PC-3 (cell line): ENCODE measurements at regions of chr9 and their contacts with region 1.

Region 1: GRCh38 chr9:107749787-107750444 is 260.3 kb upstream of the KLF4 start:
- DNase-seq: peak; percentile 84
- ATAC-seq: peak; percentile 78
- H3K4me3 ChIP-seq: peak overlapping the region; percentile 53
- H3K27ac ChIP-seq: peak overlapping the region; percentile 99
- H3K4me1 ChIP-seq: peaks cover 45% of the 10 kb centered on the region
- H3K27me3 ChIP-seq: no peaks in the 10 kb centered on the region
- CTCF ChIP-seq: no peak

Region 2: DNA sequence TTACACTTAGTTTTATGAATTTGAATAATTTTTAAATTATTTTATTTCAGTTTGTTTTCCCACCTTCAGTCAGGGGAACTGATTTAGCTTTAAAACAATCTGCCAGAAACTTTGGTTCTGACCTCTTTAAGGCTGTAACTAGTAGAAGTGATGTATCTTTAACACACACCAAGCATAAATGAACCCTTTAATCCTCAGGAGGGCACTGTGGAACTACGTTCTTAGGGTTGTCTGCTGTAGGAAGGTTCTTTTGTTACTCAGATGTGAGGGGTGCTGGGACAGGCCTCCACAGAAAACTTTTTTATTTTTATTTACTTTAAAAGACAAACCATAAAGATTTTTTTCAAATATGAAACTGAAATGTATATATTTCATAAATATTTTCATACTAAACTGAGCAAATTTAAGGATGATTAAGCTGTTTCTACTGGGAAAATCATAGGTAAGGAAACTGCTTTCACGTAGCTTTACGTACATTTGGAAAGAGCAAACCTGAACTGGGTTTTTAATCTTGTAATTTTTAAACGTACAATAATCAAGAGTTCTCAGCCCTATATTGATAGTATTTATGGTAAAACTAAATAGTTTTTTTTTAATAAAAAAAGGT is 265.7 kb before region 1 on chr9:
- CTCF ChIA-PET with region 1: no interaction called
- POLR2A ChIA-PET with region 1: no interaction called
- intact Hi-C with region 1: loop called (anchors 2 kb)
- DNase-seq: peak; percentile 74
- ATAC-seq: peak; percentile 40
- H3K4me3 ChIP-seq: no peak overlapping the region
- H3K27ac ChIP-seq: no peak overlapping the region
- H3K4me1 ChIP-seq: peaks cover 27% of the 10 kb centered on the region
- H3K27me3 ChIP-seq: no peaks in the 10 kb centered on the region
- CTCF ChIP-seq: peak; percentile 66

Region 3: GRCh38 chr9:107504569-107505377 is 245.1 kb before region 1 on chr9:
- CTCF ChIA-PET with region 1: interaction called, 4 read pairs
- POLR2A ChIA-PET with region 1: no interaction called
- intact Hi-C with region 1: loop called (anchors 5 kb)
- DNase-seq: peak; percentile 92
- ATAC-seq: peak; percentile 89
- H3K4me3 ChIP-seq: peak overlapping the region; percentile 50
- H3K27ac ChIP-seq: peak overlapping the region; percentile 99
- H3K4me1 ChIP-seq: peaks cover 23% of the 10 kb centered on the region
- H3K27me3 ChIP-seq: no peaks in the 10 kb centered on the region
- CTCF ChIP-seq: no peak

Region 4: GRCh38 chr9:107711540-107711939 is 38.4 kb before region 1 on chr9:
- CTCF ChIA-PET with region 1: no interaction called
- POLR2A ChIA-PET with region 1: no interaction called
- intact Hi-C with region 1: loop called (anchors 1 kb)
- DNase-seq: peak; percentile 97
- ATAC-seq: peak; percentile 75
- H3K4me3 ChIP-seq: no peak overlapping the region
- H3K27ac ChIP-seq: peak overlapping the region; percentile 75
- H3K4me1 ChIP-seq: peaks cover 40% of the 10 kb centered on the region
- H3K27me3 ChIP-seq: no peaks in the 10 kb centered on the region
- CTCF ChIP-seq: no peak

Region 5: GRCh38 chr9:107841076-107841475 is 91.2 kb after region 1 on chr9:
- CTCF ChIA-PET with region 1: no interaction called
- POLR2A ChIA-PET with region 1: no interaction called
- intact Hi-C with region 1: no loop called
- DNase-seq: no peak
- ATAC-seq: no peak
- H3K4me3 ChIP-seq: no peak overlapping the region
- H3K27ac ChIP-seq: no peak overlapping the region
- H3K4me1 ChIP-seq: no peaks in the 10 kb centered on the region
- H3K27me3 ChIP-seq: no peaks in the 10 kb centered on the region
- CTCF ChIP-seq: no peak

Region 6: DNA sequence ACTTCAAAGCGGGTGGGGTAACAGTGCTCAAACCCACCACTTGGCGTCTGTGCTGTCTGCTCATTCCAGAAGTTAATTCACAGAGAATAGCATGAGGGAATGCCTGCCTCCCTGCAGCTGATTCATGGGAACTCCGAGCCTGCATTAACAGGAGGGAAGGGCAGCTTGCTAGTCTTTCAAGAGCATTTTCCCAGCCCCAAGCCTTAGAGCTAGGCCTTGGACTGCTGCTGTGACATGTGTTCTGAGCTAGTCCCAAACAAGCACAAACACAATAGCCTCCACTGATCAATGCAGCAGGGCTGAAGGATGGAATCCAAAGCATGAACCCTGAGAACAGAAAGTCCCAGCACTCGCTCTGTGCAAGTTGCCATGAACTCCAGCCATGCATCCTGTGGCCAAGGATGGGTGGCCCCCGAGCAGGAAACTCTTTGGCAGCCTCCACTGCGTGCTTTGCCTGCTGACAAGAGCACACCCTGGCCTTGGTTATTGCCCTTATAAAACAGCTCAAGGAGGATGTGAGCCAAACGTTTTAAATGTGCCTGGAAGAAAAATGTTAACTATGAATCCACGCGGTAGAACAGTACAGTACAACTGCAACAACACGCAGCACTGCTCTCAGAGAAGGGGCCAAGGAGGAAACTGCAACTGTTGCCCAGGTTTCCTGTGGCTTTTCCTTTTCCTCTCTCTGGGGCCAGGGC is 392.7 kb after region 1 on chr9:
- CTCF ChIA-PET with region 1: no interaction called
- POLR2A ChIA-PET with region 1: no interaction called
- intact Hi-C with region 1: loop called (anchors 1 kb)
- DNase-seq: no peak
- ATAC-seq: peak; percentile 95
- H3K4me3 ChIP-seq: no peak overlapping the region
- H3K27ac ChIP-seq: no peak overlapping the region
- H3K4me1 ChIP-seq: no peaks in the 10 kb centered on the region
- H3K27me3 ChIP-seq: no peaks in the 10 kb centered on the region
- CTCF ChIP-seq: no peak

Region 7: DNA sequence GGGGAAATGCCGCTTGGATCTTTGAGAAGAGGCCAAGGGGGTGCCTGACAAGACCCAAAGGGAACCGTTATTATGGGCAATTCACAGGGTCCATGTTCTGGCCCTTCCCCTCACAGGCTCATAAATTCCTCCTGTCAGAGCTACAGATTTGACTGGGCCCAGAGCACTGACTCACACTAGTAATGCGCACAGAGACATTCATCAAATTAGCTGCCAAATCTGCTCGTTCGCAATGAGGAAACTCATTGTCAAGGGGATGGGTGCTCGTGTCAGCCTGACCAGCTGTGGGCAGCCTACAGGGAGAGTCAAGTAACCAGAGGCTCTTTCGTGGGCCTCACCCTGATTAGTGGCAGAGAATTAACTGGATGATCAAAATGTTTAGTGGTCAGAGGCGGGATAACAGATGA is 728.5 kb after region 1 on chr9:
- CTCF ChIA-PET with region 1: no interaction called
- POLR2A ChIA-PET with region 1: no interaction called
- intact Hi-C with region 1: loop called (anchors 10 kb)
- DNase-seq: peak; percentile 85
- ATAC-seq: peak; percentile 45
- H3K4me3 ChIP-seq: peak overlapping the region; percentile 40
- H3K27ac ChIP-seq: peak overlapping the region; percentile 99
- H3K4me1 ChIP-seq: peaks cover 60% of the 10 kb centered on the region
- H3K27me3 ChIP-seq: no peaks in the 10 kb centered on the region
- CTCF ChIP-seq: no peak; the same call in 1 of the 2 replicates